Naive thymus-derived CD4-positive, alpha-beta T cell (primary cell): ENCODE measurements at regions of chr15 and their contacts with region 1.

Region 1: DNA sequence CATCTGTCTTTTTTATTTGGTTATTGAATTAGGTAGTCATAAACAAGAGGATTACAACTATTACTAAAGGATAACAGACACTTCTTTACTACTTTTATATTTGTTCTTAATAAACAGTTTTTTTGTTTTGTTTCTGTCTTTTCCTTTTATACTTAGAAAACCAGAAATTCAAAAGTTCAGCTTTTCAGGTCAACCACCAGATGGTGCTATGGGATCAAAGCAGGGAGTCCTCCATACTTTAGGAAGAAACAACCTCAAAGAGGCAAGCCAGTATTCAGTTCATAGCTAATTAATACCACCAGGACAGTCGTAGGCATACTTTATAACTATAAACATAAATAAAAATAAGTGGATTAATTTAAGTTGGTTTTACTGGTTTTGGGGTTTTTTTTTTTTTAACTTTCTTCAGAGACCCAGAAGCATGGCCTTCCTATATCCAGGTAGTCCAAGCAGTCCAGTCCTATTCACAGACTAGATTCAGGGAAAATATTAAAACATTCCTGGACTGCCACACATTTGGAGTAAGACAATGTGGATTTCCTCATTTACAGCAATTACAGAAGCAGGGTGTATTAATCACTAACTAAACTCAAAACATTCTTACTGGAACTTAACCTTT is 16.0 kb upstream of the EID1 start:
- DNase-seq: peak in 7 of 9 donors; percentile 45 to 75 (median 66)
- ATAC-seq: peak; percentile 80
- H3K4me3 ChIP-seq: no peak overlapping the region
- H3K4me3 Mint-ChIP-seq: no peak overlapping the region
- H3K27ac ChIP-seq: no peak overlapping the region
- H3K27ac Mint-ChIP-seq: no peak overlapping the region
- H3K4me1 ChIP-seq: no peaks in the 10 kb centered on the region
- H3K4me1 Mint-ChIP-seq: peaks cover 0 to 13% (median 3%) of the 10 kb centered on the region in 7 donors
- H3K27me3 ChIP-seq: no peaks in the 10 kb centered on the region
- H3K27me3 Mint-ChIP-seq: peaks cover 2 to 21% (median 7%) of the 10 kb centered on the region in 5 donors

Region 2: GRCh38 chr15:48810414-48811317 is 51.3 kb before region 1 on chr15 and contains the start of gene CEP152:
- CTCF ChIA-PET with region 1: interaction called, 3 read pairs
- POLR2A ChIA-PET with region 1: no interaction called
- intact Hi-C with region 1: loop called in 1 of 2 experiments (anchors 2 kb)
- DNase-seq: peak; percentile 91 to 99 (median 98)
- ATAC-seq: peak; percentile 98
- H3K4me3 ChIP-seq: peak within 1 kb of the TSS; percentile 78
- H3K4me3 Mint-ChIP-seq: peak within 1 kb of the TSS; percentile 82 to 96 (median 89)
- H3K27ac ChIP-seq: peak within 1 kb of the TSS; percentile 76
- H3K27ac Mint-ChIP-seq: peak within 1 kb of the TSS; percentile 14 to 96 (median 87)
- H3K4me1 ChIP-seq: peaks cover 9 to 13% of the 10 kb centered on the region in 2 donors
- H3K4me1 Mint-ChIP-seq: peaks cover 12 to 38% (median 33%) of the 10 kb centered on the region in 7 donors
- H3K27me3 ChIP-seq: no peaks in the 10 kb centered on the region
- H3K27me3 Mint-ChIP-seq: peaks cover 0 to 24% (median 0%) of the 10 kb centered on the region in 5 donors
- total RNA-seq, gene CEP152: 6.2 to 26.3 (median 17.0) TPM

Region 3: GRCh38 chr15:48975472-48976419 is 113.8 kb after region 1 on chr15:
- CTCF ChIA-PET with region 1: interaction called, 16 read pairs
- POLR2A ChIA-PET with region 1: no interaction called
- intact Hi-C with region 1: loop called (anchors 1 to 2 kb)
- DNase-seq: peak; percentile 48 to 87 (median 71)
- ATAC-seq: peak; percentile 98
- H3K4me3 ChIP-seq: peak overlapping the region; percentile 58
- H3K4me3 Mint-ChIP-seq: peak overlapping the region; percentile 29 to 75 (median 63)
- H3K27ac ChIP-seq: no peak overlapping the region
- H3K27ac Mint-ChIP-seq: no peak overlapping the region
- H3K4me1 ChIP-seq: peaks cover 3 to 4% of the 10 kb centered on the region in 2 donors
- H3K4me1 Mint-ChIP-seq: peaks cover 0 to 10% (median 0%) of the 10 kb centered on the region in 7 donors
- H3K27me3 ChIP-seq: no peaks in the 10 kb centered on the region
- H3K27me3 Mint-ChIP-seq: peaks cover 4 to 38% (median 19%) of the 10 kb centered on the region in 5 donors

Region 4: DNA sequence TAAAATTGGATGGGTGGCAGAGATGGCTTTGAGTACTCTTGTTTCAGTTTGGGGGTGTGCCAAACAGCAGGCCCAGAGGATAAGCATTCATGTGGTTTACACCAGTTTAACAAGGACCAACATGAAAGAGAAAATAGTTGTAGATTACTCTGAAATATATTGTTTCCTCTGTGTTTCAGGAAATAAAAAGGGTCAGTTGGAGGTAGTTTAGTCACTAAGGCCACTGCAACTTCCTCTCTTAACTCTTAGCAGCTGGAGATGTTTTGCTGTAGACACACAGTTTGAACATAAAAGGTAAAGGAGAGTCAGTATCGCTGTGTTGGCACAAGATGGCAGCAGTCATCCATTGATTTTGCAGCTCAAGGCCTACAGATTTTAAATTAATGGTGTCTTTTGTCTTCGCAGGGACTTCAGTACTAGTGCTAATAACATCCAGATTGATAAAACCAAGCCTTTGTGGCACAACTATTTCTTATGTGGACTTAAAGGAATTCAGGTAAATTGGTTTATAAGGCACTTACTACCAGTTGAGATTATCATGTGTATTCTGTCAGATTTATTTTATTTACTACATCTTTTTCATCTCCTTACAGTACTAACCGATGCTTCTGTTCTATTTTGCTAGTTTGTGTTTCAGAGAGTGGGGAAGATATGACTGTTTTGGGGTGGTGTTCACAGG is 373.7 kb after region 1 on chr15:
- CTCF ChIA-PET with region 1: no interaction called
- POLR2A ChIA-PET with region 1: no interaction called
- intact Hi-C with region 1: loop called (anchors 1 to 10 kb)
- DNase-seq: peak in 7 of 9 donors; percentile 13 to 51 (median 44)
- ATAC-seq: peak; percentile 87
- H3K4me3 ChIP-seq: no peak overlapping the region
- H3K4me3 Mint-ChIP-seq: no peak overlapping the region
- H3K27ac ChIP-seq: no peak overlapping the region
- H3K27ac Mint-ChIP-seq: peak overlapping the region in 4 of 9 donors; percentile 6 to 67 (median 41)
- H3K4me1 ChIP-seq: no peaks in the 10 kb centered on the region
- H3K4me1 Mint-ChIP-seq: peaks cover 0 to 24% (median 13%) of the 10 kb centered on the region in 7 donors
- H3K27me3 ChIP-seq: no peaks in the 10 kb centered on the region
- H3K27me3 Mint-ChIP-seq: no peaks in the 10 kb centered on the region

Region 5: DNA sequence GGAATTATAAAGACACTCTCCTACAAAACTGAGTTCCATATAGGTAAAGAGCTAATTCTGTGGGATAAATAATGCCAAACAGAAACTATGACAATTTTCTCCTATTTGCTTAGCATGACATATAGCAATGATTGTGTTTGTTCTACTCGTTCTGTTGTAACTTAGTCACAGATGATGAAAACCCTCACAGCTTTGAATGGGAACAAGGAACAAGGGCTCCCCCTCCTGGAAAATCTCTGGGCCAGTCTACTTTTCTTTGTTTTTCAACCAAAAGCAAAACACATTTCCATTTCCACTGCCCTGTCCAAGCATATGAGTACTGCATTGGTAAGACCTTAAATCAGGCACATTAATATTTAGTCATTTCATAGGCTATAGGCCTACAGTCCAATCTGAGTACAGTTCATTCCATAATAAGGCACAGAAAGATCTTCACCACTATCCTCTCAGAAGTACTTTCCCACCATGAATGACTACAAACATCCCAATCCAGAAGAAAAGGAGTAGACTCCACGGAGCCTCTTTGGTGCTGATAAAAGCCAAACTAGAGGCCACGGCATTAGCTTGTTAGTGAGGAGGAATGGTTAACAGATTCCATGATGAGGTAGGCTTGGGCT is 1190.0 kb after region 1 on chr15:
- CTCF ChIA-PET with region 1: no interaction called
- POLR2A ChIA-PET with region 1: no interaction called
- intact Hi-C with region 1: loop called in 1 of 2 experiments (anchors 2 kb)
- DNase-seq: peak in 1 of 9 donors; percentile 1
- ATAC-seq: peak; percentile 50
- H3K4me3 ChIP-seq: no peak overlapping the region
- H3K4me3 Mint-ChIP-seq: no peak overlapping the region
- H3K27ac ChIP-seq: no peak overlapping the region
- H3K27ac Mint-ChIP-seq: peak overlapping the region in 1 of 9 donors; percentile 40
- H3K4me1 ChIP-seq: no peaks in the 10 kb centered on the region
- H3K4me1 Mint-ChIP-seq: peaks cover 0 to 33% (median 0%) of the 10 kb centered on the region in 7 donors
- H3K27me3 ChIP-seq: no peaks in the 10 kb centered on the region
- H3K27me3 Mint-ChIP-seq: peaks cover 0 to 40% (median 12%) of the 10 kb centered on the region in 5 donors